WTC11 (cell line): ENCODE measurements at regions of chr6 and their contacts with region 1.

Region 1: GRCh38 chr6:20404641-20405032 is 3.0 kb downstream of the E2F3 start:
- DNase-seq: peak; percentile 60
- ATAC-seq: no peak
- H3K4me3 Mint-ChIP-seq: peak overlapping the region; percentile 100
- H3K27ac Mint-ChIP-seq: peak overlapping the region; percentile 98
- H3K4me1 Mint-ChIP-seq: peaks cover 49% of the 10 kb centered on the region
- H3K27me3 Mint-ChIP-seq: no peaks in the 10 kb centered on the region; the same call in 1 of the 2 replicates
- CTCF ChIP-seq: no peak

Region 2: GRCh38 chr6:20492099-20492498 is 87.5 kb after region 1 on chr6:
- CTCF ChIA-PET with region 1: no interaction called
- POLR2A ChIA-PET with region 1: no interaction called
- DNase-seq: no peak
- ATAC-seq: no peak
- H3K4me3 Mint-ChIP-seq: no peak overlapping the region
- H3K27ac Mint-ChIP-seq: no peak overlapping the region
- H3K4me1 Mint-ChIP-seq: peaks cover 13% of the 10 kb centered on the region
- H3K27me3 Mint-ChIP-seq: no peaks in the 10 kb centered on the region
- CTCF ChIP-seq: no peak

Region 3: DNA sequence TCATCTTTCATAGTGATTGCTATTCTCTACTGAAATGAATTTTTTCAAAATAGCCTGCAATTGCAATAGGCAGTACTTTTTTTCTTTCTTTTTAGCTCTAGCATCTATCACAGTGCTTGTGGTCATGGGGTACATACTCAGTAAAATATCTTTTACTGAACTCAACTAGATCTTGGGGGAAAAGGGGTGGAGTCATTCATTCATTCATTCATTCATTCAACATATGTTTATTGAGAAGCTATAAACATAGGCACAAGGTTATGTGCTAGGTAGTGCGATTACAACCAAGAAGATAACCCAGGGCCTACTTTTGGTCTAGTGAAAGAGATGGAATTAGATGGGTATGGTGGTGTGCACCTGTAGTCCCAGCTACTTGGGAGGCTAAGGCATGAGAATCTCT is 128.3 kb after region 1 on chr6:
- CTCF ChIA-PET with region 1: interaction called, 11 read pairs
- POLR2A ChIA-PET with region 1: no interaction called
- DNase-seq: no peak
- ATAC-seq: no peak
- H3K4me3 Mint-ChIP-seq: no peak overlapping the region
- H3K27ac Mint-ChIP-seq: no peak overlapping the region
- H3K4me1 Mint-ChIP-seq: peaks cover 23% of the 10 kb centered on the region
- H3K27me3 Mint-ChIP-seq: no peaks in the 10 kb centered on the region
- CTCF ChIP-seq: no peak